IMR-90 (cell line): ENCODE measurements at regions of chr6 and their contacts with region 1.

Region 1: GRCh38 chr6:151440930-151441329 is 11.0 kb downstream of the RMND1 start:
- DNase-seq: peak; percentile 50
- ATAC-seq: no peak
- H3K4me3 ChIP-seq: no peak overlapping the region
- H3K27ac ChIP-seq: no peak overlapping the region
- H3K4me1 ChIP-seq: peaks cover 4% of the 10 kb centered on the region
- H3K27me3 ChIP-seq: no peaks in the 10 kb centered on the region
- CTCF ChIP-seq: peak; percentile 63
- POLR2A ChIP-seq: no peak
- RAD21 ChIP-seq: peak; percentile 63

Region 2: DNA sequence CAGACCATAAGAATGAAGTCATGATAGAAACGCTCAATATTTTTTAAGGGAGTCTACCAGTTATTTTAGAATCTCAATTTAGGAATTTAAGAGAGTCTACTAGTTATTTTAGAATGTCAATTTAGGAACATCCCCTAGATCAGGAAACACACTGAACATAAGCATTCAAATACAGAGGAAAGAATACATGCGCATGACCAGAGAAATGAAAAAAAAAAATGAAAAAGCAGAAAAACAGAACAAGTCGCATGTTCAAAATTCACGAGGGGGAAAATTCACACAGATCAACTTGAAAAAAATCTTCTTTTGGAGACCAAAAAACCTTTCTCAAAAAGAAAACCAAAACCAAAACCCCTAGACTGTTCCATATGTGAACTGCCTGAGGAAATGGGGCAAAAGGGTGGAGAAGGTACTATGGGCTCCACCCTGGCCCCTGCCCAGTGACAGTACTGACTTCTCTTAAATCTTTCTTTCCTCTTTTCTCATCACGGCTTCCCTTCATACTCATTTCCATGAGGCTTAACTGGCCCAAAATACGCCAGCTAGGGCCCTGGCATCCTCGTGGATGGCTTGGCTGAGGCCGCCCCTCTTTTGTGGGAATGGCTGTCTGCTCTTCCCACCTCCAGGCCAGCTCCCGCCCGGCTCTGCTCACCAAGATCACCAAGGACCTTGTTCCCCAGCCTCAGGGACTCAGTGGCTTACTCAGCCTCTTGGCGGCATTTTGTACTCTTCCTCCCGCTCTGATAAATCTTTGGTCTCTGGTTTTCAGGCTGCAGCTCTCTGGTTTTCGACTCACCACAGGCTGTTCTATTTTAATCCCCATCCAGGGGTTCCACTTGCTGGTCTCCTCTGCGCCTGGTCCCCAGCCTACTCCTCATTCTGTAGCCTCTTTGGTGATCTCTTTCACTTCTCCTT is 60.7 kb before region 1 on chr6:
- CTCF ChIA-PET with region 1: no interaction called
- POLR2A ChIA-PET with region 1: no interaction called
- dilution Hi-C with region 1: no loop called
- in situ Hi-C with region 1: no loop called
- intact Hi-C with region 1: no loop called
- DNase-seq: no peak
- ATAC-seq: no peak
- H3K4me3 ChIP-seq: no peak overlapping the region
- H3K27ac ChIP-seq: no peak overlapping the region
- H3K4me1 ChIP-seq: no peaks in the 10 kb centered on the region; the same call in 1 of the 2 replicates
- H3K27me3 ChIP-seq: no peaks in the 10 kb centered on the region
- CTCF ChIP-seq: no peak
- POLR2A ChIP-seq: no peak
- RAD21 ChIP-seq: no peak

Region 3: GRCh38 chr6:151461673-151462072 is 20.7 kb after region 1 on chr6:
- CTCF ChIA-PET with region 1: no interaction called
- POLR2A ChIA-PET with region 1: no interaction called
- dilution Hi-C with region 1: no loop called
- in situ Hi-C with region 1: no loop called
- intact Hi-C with region 1: no loop called
- DNase-seq: no peak
- ATAC-seq: no peak
- H3K4me3 ChIP-seq: no peak overlapping the region
- H3K27ac ChIP-seq: no peak overlapping the region
- H3K4me1 ChIP-seq: no peaks in the 10 kb centered on the region
- H3K27me3 ChIP-seq: no peaks in the 10 kb centered on the region
- CTCF ChIP-seq: no peak
- POLR2A ChIP-seq: no peak
- RAD21 ChIP-seq: no peak

Region 4: GRCh38 chr6:151475653-151476523 is 35.0 kb after region 1 on chr6:
- CTCF ChIA-PET with region 1: interaction called, 3 read pairs
- POLR2A ChIA-PET with region 1: no interaction called
- dilution Hi-C with region 1: no loop called
- in situ Hi-C with region 1: no loop called
- intact Hi-C with region 1: loop called (anchors 1 kb)
- DNase-seq: peak; percentile 59
- ATAC-seq: peak; percentile 61
- H3K4me3 ChIP-seq: no peak overlapping the region
- H3K27ac ChIP-seq: 0 out of 2 replicates have a peak overlapping the region, but pooled peaks have one; percentile 16
- H3K4me1 ChIP-seq: 0 out of 2 replicates have a peak, but pooled peaks cover 3% of the 10 kb centered on the region
- H3K27me3 ChIP-seq: no peaks in the 10 kb centered on the region
- CTCF ChIP-seq: peak; percentile 75
- POLR2A ChIP-seq: no peak
- RAD21 ChIP-seq: peak; percentile 62

Region 5: DNA sequence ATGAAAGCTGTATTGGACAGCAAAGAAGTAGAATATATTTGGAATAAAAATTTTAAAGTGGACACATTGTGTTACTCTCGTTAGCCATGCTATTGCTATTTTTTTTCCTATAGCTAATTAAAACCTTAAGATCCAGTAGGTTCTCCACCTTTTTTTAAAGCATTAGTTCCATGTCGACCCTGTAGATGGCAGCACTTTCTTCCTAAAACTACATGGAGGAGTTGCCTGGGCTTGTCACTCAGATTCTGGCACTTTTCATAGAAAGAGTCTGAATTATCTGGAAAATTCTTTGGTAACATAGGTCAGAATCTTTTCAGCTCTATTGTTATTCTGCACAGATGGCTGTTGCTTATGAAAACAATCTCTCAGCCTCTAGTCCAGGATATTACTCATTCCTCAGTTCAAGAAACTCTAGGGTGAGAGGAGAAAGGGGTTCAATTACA is 324.5 kb after region 1 on chr6:
- CTCF ChIA-PET with region 1: interaction called, 3 read pairs
- POLR2A ChIA-PET with region 1: no interaction called
- dilution Hi-C with region 1: no loop called
- in situ Hi-C with region 1: no loop called
- intact Hi-C with region 1: loop called (anchors 1 kb)
- DNase-seq: peak; percentile 77
- ATAC-seq: peak; percentile 70
- H3K4me3 ChIP-seq: no peak overlapping the region
- H3K27ac ChIP-seq: no peak overlapping the region
- H3K4me1 ChIP-seq: 0 out of 2 replicates have a peak, but pooled peaks cover 1% of the 10 kb centered on the region
- H3K27me3 ChIP-seq: no peaks in the 10 kb centered on the region
- CTCF ChIP-seq: peak; percentile 70
- POLR2A ChIP-seq: no peak
- RAD21 ChIP-seq: peak; percentile 62